Natural killer cell (primary cell): ENCODE measurements at regions of chr3 and their contacts with region 1.

Region 1: DNA sequence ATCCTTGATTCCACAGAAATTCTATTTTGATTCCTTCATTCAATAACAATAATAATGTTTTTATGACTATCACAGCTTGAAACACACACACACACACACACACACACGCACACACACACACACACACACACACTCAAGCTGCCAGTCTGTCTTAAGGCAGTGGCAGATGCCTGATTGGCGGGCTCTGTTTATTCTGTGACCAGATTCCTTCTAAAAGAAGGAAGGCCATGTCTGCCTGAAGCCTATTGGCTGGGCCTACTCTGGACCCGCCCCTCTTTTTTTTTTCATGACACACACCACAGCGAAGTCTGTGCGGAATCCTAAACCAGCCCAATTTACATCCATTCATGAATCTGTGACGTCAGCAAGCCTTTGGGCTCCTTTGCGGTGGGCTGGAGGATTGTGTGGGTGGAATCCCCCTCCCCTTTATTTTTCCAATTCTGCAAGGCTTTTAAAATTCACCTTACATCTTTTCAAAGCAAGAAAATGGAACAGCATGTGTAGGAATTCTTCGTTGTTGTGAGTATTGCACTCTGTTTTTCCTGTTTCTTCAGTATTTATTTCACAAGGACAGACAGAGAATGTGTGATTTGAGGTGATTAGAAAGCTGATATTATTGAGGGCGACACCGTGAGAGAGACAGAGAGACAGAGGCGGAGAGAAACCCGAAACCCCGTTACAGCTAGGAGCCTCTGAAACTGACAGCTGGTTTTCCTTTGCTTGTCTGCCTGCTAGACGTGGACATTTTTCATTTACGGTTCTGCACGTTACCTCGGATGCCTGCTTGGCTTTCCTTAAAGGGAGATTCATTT is at the start of gene MAP3K13:
- DNase-seq: peak; percentile 38 to 61
- ATAC-seq: peak; percentile 83 to 98 (median 93)
- H3K4me3 ChIP-seq: peak within 1 kb of the TSS; percentile 20
- H3K4me3 Mint-ChIP-seq: peak within 1 kb of the TSS; percentile 85
- H3K27ac ChIP-seq: no peak within 1 kb of the TSS
- H3K27ac Mint-ChIP-seq: peak within 1 kb of the TSS in 1 of 2 donors; percentile 70
- H3K4me1 ChIP-seq: peaks cover 10% of the 10 kb centered on the region
- H3K4me1 Mint-ChIP-seq: peaks cover 13 to 16% of the 10 kb centered on the region in 2 donors
- H3K27me3 ChIP-seq: peaks cover 19% of the 10 kb centered on the region
- H3K27me3 Mint-ChIP-seq: peaks cover 33 to 49% of the 10 kb centered on the region in 2 donors
- CTCF ChIP-seq: no peak
- total RNA-seq, gene MAP3K13: 3.3 to 11.8 (median 9.8) TPM

Region 2: GRCh38 chr3:185552358-185552877 is 189.4 kb after region 1 on chr3 and contains the start of gene LIPH:
- intact Hi-C with region 1: loop called (anchors 10 kb)
- DNase-seq: no peak
- ATAC-seq: peak in 1 of 3 donors; percentile 31
- H3K4me3 ChIP-seq: no peak within 1 kb of the TSS
- H3K4me3 Mint-ChIP-seq: no peak within 1 kb of the TSS
- H3K27ac ChIP-seq: no peak within 1 kb of the TSS
- H3K27ac Mint-ChIP-seq: peak within 1 kb of the TSS in 1 of 2 donors; percentile 31
- H3K4me1 ChIP-seq: no peaks in the 10 kb centered on the region
- H3K4me1 Mint-ChIP-seq: peaks cover 7 to 8% of the 10 kb centered on the region in 2 donors
- H3K27me3 ChIP-seq: no peaks in the 10 kb centered on the region
- H3K27me3 Mint-ChIP-seq: no peaks in the 10 kb centered on the region
- CTCF ChIP-seq: no peak
- total RNA-seq, gene LIPH: 0.09 to 0.16 TPM in 2 of 3 donors, not detected in the other